Posterior vena cava (tissue), 2 donors: ENCODE measurements at regions of chr5 and their contacts with region 1.

Region 1: GRCh38 chr5:28877050-28877449 is 1838.7 kb upstream of the CDH9 start:
- DNase-seq: no peak

Region 2: DNA sequence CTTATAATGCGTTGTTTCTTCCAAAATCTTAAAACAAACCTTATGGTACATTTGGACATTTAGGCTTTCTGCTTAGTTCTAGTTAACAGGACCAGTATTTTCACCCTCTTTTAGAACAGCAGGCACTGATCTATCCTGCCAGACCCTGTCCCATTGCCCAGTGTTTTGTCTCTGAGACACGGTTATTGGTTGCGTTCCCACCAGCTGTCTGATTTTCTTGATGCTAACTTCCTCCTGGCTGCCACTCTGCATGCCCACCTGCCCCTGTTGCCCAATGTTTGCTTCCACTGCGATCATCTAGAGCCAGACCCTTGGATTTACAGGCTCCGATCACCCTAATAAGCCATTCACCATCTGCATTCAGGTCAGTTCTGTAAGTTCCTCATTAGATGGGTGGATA is 1810.4 kb after region 1 on chr5:
- intact Hi-C with region 1: loop called in 1 of 2 experiments (anchors 10 kb)
- DNase-seq: no peak